ENCODE measurements at regions of chr19 and their contacts with region 1.

Region 1: DNA sequence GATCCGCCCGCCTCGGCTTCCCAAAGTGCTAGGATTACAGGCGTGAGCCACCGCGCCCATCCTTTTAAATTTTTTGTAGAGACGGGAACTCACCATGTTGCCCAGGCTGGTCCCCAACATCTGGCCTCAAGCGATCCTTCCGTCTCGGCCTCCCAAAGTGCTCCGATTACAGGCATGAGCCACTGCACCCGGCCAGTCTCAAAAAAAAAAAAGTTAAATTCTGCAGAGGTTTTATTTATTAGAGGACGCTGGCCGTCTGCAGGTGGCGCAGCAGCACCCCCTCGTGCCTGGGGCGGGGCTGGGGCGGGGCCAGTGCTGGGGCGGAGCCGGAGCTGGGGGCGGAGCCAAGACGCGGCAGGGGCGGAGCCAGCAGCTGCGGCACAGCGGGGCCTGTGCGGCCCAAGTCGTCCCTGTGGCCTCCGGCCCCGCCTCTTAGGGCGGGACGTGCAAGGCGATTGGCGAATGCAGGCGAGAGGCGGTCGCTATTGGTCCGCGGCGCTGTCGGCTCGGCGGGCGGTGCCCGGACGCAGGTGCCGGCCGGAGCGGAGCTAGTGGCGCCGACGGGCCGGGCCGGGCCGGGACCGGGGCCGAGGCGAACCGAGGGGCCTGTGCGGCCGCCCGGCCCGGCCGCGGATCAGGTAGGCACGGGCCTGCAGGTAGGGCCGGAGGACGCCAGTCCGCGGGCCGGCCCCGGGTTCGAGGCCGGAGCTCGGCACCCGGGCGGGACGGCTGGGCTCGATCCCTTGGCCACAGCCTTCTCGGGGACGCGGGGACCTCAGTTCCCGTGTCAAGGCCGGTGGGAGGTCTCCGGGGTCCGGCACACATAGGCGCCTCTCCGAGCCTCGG is at the start of gene MARCHF2:
- DNase-seq: peak; percentile 95 to 99 (median 97)
- H3K4me3 ChIP-seq: peak within 1 kb of the TSS; percentile 67
- H3K27ac ChIP-seq: no peak within 1 kb of the TSS
- H3K4me1 ChIP-seq: peaks cover 5% of the 10 kb centered on the region
- H3K27me3 ChIP-seq: no peaks in the 10 kb centered on the region
- CTCF ChIP-seq: peak; percentile 62 to 70 (median 65)
- EP300 ChIP-seq: no peak
- POLR2A ChIP-seq: peak; percentile 41
- total RNA-seq, gene MARCHF2: 20.7 to 62.7 (median 27.2) TPM

Region 2: DNA sequence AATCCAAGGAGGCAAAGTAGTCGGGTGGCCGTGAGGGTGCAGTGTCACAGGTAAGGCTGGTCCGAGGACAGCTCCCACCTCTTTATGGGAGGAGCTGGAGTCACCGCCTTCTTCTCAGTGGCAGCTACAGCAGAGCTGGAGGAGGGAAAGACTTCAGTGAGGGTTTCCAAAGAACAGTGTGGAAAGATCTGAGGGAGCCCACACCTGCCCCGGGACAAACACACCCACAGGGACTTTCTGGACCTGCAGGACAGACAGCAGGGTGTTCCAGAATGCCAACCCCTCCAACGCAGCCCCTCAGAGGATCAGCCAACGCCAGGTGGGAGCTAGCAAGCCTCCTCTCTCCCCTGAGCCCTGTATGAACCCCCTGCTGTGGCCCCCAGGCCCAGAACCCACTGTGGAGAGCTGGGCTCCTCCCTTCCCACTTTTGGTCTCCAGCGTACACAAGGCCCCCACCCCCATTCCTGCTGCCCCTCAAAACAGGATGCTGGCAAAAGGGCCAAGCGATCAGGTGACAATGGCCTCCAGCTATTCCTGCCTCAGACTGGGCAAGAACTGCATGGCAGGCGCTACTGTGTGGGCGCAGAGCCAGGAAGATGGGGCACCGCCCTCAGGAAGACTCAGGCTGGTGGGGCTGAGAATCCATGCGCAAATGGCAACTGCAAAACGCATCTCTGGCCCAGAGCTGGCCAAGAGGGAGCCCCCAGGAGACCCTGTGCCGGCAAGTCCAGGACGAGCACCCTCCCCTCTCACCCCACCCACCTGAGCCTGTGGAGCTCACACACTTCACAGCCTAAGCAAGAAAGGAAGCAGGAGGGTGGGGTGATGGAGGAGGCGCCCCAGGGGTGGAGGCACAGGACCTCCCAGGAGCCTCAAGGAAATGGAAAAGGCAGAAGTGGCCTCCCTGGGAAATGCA is 101.3 kb before region 1 on chr19:
- intact Hi-C with region 1: no loop called
- DNase-seq: peak in 4 of 5 donors; percentile 27 to 51 (median 34)
- H3K4me3 ChIP-seq: no peak overlapping the region
- H3K27ac ChIP-seq: no peak overlapping the region
- H3K4me1 ChIP-seq: peaks cover 7% of the 10 kb centered on the region
- H3K27me3 ChIP-seq: no peaks in the 10 kb centered on the region
- CTCF ChIP-seq: no peak
- EP300 ChIP-seq: no peak
- POLR2A ChIP-seq: no peak

Region 3: DNA sequence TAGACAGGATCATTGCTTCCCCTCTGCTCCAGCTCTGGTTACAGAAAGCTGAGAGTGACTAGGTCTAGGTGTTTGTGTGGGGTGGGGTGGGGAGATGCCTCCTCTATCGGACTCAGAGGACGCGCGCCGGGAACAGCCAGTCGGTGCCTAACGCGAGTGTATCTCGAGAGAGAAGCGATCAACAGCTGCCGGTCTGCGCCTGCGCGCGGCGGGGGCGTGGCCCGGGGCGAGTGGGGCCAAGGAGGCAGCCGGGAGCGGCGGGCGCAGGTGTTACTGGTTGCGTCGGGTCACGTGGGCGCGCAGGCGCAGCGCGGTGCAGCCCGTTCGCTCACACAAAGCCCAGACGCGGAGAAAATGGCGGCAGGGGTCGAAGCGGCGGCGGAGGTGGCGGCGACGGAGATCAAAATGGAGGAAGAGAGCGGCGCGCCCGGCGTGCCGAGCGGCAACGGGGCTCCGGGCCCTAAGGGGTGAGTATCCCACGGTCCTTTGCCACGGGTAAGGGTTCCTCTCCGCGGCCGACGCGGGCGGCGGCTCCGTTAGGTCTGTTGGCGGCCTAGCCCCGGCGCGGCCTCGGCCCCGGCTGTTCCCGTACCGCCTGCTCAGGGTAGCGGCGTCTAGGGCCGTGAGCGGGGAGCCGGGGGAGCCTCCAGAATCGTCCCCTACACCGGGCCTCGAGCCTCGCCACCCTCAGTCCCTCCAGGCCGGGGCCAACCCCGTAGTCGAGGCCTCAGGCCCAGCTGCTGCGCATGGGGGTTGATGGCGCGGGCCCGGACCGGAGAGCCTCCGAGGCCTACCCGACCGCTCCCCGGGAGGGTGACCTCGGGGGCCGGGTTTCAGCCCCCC is 31.9 kb after region 1 on chr19 and contains the start of gene HNRNPM:
- intact Hi-C with region 1: loop called in 1 of 4 experiments (anchors 2 kb)
- DNase-seq: peak; percentile 99 to 100 (median 100)
- H3K4me3 ChIP-seq: peak within 1 kb of the TSS; percentile 95
- H3K27ac ChIP-seq: peak within 1 kb of the TSS; percentile 83 to 87
- H3K4me1 ChIP-seq: peaks cover 7% of the 10 kb centered on the region
- H3K27me3 ChIP-seq: no peaks in the 10 kb centered on the region
- CTCF ChIP-seq: peak in 1 of 3 donors; percentile 17
- EP300 ChIP-seq: no peak
- POLR2A ChIP-seq: peak; percentile 94
- total RNA-seq, gene HNRNPM: 88.2 to 220 (median 180) TPM

Measured in ovary (tissue), 10 donors.